ENCODE measurements at regions of chr5 and their contacts with region 1.

Region 1: DNA sequence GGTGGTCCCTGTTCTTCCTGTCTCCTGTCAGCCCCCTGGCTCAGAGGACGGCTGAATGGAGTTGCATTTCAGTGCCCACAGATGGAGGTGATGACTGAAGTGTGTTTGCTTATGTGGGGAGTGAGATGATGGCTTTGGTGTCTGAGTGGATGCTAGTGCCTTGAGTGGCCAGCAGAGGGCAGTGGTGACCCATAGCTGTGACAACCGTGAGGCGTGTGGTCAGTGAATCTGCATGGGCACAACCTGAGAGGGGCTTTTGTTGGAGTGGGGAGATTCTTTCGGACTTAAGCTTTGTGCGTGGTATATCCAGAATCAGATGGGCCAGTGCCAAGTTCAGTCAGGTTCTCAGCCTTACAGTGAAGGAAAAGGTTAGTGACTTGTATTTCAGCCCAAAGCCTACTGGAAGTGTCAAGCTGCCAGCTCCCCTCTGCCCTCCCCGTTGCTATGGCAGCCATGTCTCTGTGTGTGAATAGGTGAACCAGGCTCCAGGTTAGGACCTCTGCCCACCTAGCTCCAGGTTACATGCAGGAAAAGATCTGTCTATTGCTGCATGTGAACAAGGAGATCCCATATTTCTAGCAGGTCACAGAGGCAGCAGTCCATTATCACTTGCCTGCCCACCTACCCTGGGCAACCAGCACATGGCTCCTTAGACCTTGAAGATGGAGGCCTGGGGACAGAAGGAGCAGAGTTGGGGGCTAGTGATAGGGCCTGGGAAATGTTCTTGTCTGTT is 14.7 kb upstream of the CXXC5 start:
- DNase-seq: peak; percentile 75 to 76
- H3K4me3 ChIP-seq: no peak overlapping the region
- H3K4me3 Mint-ChIP-seq: no peak overlapping the region
- H3K27ac Mint-ChIP-seq: peak overlapping the region; percentile 53
- H3K4me1 ChIP-seq: peaks cover 10% of the 10 kb centered on the region; the same call in 1 of the 2 replicates
- H3K4me1 Mint-ChIP-seq: peaks cover 23% of the 10 kb centered on the region
- H3K27me3 ChIP-seq: no peaks in the 10 kb centered on the region
- H3K27me3 Mint-ChIP-seq: no peaks in the 10 kb centered on the region
- CTCF ChIP-seq: peak; percentile 93 to 96

Region 2: DNA sequence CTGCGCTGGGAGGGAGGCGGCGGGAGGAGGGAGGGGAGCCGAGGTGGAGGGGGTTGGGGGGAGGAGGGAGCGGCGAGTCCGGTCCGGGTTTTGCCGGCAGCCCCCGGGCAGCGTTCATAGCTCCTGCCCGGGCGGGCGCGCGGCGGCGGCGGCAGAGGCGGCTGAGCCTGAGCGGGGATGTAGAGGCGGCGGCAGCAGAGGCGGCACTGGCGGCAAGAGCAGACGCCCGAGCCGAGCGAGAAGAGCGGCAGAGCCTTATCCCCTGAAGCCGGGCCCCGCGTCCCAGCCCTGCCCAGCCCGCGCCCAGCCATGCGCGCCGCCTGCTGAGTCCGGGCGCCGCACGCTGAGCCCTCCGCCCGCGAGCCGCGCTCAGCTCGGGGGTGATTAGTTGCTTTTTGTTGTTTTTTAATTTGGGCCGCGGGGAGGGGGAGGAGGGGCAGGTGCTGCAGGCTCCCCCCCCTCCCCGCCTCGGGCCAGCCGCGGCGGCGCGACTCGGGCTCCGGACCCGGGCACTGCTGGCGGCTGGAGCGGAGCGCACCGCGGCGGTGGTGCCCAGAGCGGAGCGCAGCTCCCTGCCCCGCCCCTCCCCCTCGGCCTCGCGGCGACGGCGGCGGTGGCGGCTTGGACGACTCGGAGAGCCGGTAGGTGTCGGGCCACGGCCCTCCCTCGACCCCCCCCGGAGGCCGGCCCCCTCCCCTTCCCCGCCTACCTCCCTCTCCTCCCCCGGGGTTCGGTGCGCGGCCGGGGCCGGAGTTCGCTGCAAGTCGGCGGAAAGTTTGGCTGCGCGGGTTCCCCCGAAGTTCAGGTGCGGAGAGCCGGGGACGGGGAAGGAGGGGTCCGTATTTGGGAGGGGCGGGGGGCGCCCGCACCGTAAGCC is 15.0 kb after region 1 on chr5 and contains the start of gene CXXC5:
- CTCF ChIA-PET with region 1: interaction called, 29 read pairs
- POLR2A ChIA-PET with region 1: interaction called, 3 read pairs
- intact Hi-C with region 1: loop called (anchors 1 kb)
- DNase-seq: peak; percentile 88 to 90
- H3K4me3 ChIP-seq: peak within 1 kb of the TSS; percentile 91
- H3K4me3 Mint-ChIP-seq: peak within 1 kb of the TSS; percentile 93
- H3K27ac Mint-ChIP-seq: no peak within 1 kb of the TSS
- H3K4me1 ChIP-seq: peaks cover 58% of the 10 kb centered on the region
- H3K4me1 Mint-ChIP-seq: peaks cover 48% of the 10 kb centered on the region
- H3K27me3 ChIP-seq: no peaks in the 10 kb centered on the region
- H3K27me3 Mint-ChIP-seq: no peaks in the 10 kb centered on the region
- CTCF ChIP-seq: no peak
- total RNA-seq, gene CXXC5: 79.5 and 92.3 TPM in 2 replicates

Region 3: GRCh38 chr5:139690064-139690802 is 56.8 kb after region 1 on chr5:
- CTCF ChIA-PET with region 1: interaction called, 16 read pairs
- POLR2A ChIA-PET with region 1: interaction called, 3 read pairs
- intact Hi-C with region 1: loop called (anchors 1 kb)
- DNase-seq: peak in 1 of 2 experiments; percentile 34
- H3K4me3 ChIP-seq: no peak overlapping the region
- H3K4me3 Mint-ChIP-seq: no peak overlapping the region
- H3K27ac Mint-ChIP-seq: peak overlapping the region; percentile 79
- H3K4me1 ChIP-seq: peaks cover 16% of the 10 kb centered on the region
- H3K4me1 Mint-ChIP-seq: peaks cover 22% of the 10 kb centered on the region
- H3K27me3 ChIP-seq: no peaks in the 10 kb centered on the region
- H3K27me3 Mint-ChIP-seq: no peaks in the 10 kb centered on the region
- CTCF ChIP-seq: peak in 1 of 2 experiments; percentile 23

Region 4: DNA sequence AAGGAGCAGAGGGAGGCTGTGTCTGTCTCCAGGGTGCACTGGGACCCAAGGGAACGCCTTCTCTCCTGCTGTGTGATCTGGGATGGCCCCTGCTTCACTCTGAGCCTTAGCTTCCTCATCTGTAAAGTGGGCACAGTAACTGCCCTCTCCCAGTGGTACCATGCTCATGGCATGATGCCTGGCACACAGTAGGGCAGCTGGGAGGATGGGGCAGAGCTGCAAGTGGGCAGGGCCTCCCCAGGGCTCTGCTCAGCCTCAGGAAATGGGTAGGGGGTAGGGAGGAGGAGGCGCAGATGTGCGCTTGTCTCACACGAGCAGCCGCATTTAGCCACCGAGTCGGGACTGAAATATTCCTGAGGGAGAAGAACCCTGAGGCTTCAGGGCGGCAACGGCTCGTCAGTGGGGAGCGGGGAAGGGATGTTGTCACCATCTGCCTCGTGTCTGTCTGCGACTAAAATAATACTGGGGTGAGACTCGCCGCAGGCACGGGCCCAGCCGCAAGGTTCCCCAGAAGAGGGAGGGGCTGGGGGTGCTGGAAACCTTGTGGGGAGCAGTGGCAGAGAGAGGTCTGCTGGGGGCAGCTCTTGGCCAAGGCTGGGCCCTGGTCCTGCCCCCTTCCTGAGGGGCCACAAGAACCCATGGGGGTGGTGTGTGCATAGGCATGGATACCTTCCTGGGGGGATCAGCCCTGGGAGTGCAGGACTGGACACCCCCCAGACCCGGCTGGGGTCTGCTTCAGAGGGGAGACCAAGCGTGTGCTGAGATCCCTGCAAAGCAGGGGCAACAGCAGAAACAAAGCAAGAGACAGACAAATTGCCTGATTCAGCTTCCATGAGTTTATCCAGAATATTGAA is 106.9 kb after region 1 on chr5:
- CTCF ChIA-PET with region 1: no interaction called
- POLR2A ChIA-PET with region 1: no interaction called
- intact Hi-C with region 1: no loop called
- DNase-seq: no peak
- H3K4me3 ChIP-seq: no peak overlapping the region
- H3K4me3 Mint-ChIP-seq: no peak overlapping the region
- H3K27ac Mint-ChIP-seq: no peak overlapping the region
- H3K4me1 ChIP-seq: peaks cover 10% of the 10 kb centered on the region
- H3K4me1 Mint-ChIP-seq: peaks cover 16% of the 10 kb centered on the region
- H3K27me3 ChIP-seq: no peaks in the 10 kb centered on the region
- H3K27me3 Mint-ChIP-seq: no peaks in the 10 kb centered on the region
- CTCF ChIP-seq: no peak

Region 5: DNA sequence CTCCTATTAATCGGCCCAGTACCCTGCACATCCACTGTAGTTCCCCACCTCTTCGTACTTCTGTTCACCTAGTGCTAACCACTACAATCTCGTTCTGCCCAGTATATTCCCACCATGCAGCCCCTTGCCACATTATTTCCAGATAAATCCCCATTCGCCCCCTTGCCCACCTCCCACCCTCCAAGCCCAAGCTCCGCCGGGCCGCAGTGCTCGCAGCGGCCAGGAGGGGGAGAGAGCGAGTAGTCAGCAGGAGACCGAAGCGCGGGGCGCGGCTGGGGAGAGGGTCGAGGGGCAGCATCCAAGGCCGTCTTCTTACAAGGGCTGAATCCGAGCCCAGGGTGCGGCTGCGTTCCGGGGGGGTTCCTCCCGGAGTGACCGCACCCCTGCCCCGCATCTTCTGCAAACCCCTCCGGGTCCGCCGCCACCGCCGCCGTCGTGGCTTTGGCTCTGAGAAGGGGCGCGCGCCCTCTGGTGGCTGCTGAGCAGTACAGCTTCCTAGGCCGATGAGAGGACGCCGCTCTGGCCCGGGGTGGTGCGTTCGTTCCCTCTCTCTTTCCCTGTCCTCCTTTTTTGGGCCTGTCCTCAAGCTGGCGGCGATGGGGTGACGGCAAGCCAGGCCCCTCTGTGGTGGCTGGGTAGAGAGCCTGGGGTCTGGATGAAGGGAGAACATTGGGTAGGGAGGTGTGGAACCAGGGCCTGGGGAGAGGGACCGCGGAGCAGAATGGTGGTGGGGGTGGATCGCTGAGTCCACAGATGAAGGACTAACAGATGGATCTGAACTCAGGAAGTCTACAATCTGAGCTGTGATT is 132.2 kb after region 1 on chr5:
- CTCF ChIA-PET with region 1: interaction called, 46 read pairs
- POLR2A ChIA-PET with region 1: no interaction called
- intact Hi-C with region 1: loop called (anchors 1 kb)
- DNase-seq: peak; percentile 75 to 87
- H3K4me3 ChIP-seq: peak overlapping the region; percentile 62
- H3K4me3 Mint-ChIP-seq: peak overlapping the region; percentile 67
- H3K27ac Mint-ChIP-seq: peak overlapping the region; percentile 47
- H3K4me1 ChIP-seq: peaks cover 9% of the 10 kb centered on the region; the same call in 1 of the 2 replicates
- H3K4me1 Mint-ChIP-seq: peaks cover 6% of the 10 kb centered on the region
- H3K27me3 ChIP-seq: no peaks in the 10 kb centered on the region
- H3K27me3 Mint-ChIP-seq: no peaks in the 10 kb centered on the region
- CTCF ChIP-seq: peak; percentile 86 to 99

Measured in Caco-2 (cell line).